Panc1 (cell line): ENCODE measurements at regions of chr20 and their contacts with region 1.

Region 1: DNA sequence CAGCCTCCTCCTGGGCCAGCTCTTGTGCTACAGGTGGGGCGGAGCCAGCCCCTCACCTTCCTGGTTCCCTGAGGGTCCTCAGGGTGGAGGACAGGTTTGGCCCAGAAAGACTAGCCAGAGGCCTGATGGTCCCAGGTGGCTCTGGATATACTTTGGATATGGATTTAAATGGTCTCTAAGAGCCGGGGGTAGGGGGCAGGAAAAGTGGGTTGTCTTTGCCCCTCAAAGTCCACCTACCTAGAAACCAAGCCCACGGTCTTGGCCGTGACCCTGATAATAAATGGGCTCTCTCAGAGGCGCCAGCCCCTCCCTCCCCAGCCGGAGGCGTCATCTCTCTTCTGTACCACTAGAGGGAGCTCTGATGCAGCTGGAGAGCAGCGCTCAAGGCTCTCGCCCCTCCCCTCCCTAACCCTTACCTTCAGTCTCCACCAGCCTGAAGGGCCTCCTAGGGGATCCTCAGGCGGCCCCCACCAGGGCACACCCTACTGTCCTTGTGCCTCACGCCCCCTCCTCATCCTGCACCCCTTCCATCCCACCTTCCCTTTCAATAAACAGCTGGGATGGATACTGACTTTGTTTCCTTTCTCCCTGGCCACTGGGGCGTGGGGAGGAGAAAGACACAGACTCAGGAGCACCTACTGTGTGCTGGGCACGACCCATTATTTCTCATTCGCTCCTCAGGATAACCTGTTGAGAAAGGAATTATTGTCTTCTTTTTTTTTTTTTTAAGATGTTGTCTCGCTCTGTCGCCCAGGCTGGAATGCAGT is 7.6 kb downstream of the NRSN2 start:
- DNase-seq: no peak
- ATAC-seq: peak; percentile 94
- H3K4me3 ChIP-seq: no peak overlapping the region
- H3K27ac ChIP-seq: peak overlapping the region; percentile 57; the same call in 1 of the 2 replicates
- H3K4me1 ChIP-seq: no peaks in the 10 kb centered on the region
- H3K27me3 ChIP-seq: no peaks in the 10 kb centered on the region
- CTCF ChIP-seq: peak; percentile 95

Region 2: DNA sequence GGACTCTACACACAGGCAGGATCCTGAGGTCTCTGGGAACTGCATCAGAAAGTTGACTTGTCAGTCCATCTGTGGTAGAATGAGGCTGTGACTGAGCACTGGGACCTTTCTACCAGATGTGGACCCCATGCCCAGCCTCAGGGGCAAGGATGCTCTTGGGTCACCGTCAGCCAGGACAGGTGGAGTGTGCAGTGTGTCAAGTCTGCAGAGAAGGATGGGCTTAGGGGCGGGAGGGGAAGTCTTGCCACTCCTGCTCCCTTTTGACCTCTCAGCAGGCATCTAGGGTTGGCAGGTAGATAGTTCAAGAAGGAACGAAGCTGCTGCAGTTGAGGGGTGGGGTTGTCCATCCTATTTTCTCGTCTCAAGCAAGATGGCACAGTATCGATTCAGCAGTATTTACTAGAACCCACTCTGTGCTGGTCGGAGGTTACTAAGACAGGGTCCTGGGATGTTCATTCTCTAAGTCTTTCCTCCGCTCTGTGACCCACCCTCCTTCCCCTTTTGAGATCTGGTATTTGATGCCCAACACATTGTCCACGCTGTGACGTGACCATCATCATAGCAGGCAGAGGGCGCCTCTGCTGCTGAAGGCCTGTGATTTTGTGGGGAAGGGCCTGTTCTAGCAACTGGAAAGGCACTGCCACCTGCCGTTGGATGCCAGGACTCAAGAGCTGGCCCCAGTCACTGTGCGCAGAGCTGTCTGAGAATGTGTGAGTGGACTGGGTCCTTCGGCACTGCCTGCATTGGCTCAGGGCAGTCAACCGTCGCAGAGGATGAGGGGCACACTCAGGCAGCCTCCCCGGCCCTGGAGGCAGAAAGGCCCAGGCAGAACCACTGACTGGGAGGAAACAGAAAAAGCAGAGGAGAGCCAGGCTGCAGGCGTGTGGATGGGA is 76.8 kb after region 1 on chr20:
- CTCF ChIA-PET with region 1: interaction called, 16 read pairs
- POLR2A ChIA-PET with region 1: no interaction called
- in situ Hi-C with region 1: no loop called
- intact Hi-C with region 1: loop called (anchors 5 kb)
- DNase-seq: peak; percentile 58
- ATAC-seq: peak; percentile 83
- H3K4me3 ChIP-seq: no peak overlapping the region
- H3K27ac ChIP-seq: no peak overlapping the region
- H3K4me1 ChIP-seq: no peaks in the 10 kb centered on the region
- H3K27me3 ChIP-seq: no peaks in the 10 kb centered on the region
- CTCF ChIP-seq: peak; percentile 92

Region 3: DNA sequence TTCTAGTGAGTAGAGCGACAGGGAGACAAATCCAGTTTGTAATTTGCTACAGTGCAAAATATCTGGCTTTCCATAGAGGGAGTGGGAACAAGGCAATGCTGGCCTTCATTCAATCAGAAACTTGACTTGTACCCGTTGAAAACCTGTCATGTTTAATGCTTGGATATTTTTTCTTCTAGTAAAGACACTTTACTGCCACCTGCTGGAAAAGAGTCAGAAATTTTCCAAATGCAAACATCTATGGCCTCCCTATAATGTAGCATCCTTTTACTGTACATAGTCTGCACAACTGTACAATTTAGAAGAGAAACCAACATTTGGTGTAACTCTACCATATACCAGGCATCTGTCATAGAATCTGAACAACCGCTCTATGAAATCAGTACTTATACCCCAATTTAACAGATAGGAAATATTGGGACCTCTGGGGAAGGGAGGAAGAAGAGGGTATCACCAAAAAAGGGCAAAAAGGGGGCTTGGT is 124.5 kb after region 1 on chr20:
- CTCF ChIA-PET with region 1: no interaction called
- POLR2A ChIA-PET with region 1: no interaction called
- in situ Hi-C with region 1: no loop called
- intact Hi-C with region 1: loop called (anchors 1 kb)
- DNase-seq: peak; percentile 42
- ATAC-seq: peak; percentile 68; the same call in 1 of the 2 replicates
- H3K4me3 ChIP-seq: no peak overlapping the region
- H3K27ac ChIP-seq: no peak overlapping the region
- H3K4me1 ChIP-seq: no peaks in the 10 kb centered on the region
- H3K27me3 ChIP-seq: no peaks in the 10 kb centered on the region
- CTCF ChIP-seq: peak; percentile 68